Activated CD4-positive, alpha-beta T cell treated with anti-CD3 and anti-CD28 coated beads for 36 hours (primary cell): ENCODE measurements at regions of chr4 and their contacts with region 1.

Region 1: DNA sequence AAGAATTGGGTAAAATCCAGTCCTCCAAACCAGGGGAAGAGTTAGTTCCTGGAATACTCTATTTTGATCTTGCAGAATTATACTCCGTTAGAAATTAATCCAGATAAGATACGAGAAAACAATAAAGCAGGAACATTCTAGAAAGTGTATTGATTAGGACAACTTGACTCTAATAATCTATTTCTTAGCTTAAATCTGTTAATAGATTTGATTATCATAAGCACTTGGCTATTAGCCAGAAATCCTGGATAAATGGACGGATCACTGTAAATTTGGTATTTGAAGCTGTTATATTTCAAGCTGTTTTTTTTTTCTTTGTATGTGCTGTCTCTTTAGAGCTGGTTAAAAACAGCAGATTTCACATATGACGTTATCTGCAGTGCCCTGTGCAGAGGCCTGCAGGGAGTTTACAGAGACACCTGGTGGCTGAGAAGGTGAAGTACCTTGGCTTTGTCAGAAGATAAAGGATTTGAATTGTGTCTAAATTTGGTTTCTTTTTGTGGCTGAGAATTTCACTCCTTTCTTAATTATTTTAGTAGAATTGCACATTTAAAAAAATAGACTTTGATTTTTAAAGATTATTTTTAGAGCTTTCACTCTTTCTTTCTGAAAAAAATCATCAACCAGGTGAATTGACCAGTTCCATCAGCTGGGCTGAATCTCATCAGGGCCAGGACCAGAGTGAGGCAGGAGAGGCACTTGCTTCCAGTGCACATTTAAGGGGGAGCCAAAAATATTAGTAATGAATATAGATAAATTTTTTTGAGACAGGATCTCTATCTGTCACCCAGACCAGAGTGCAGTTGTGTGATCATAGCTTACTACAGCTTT is 9.7 kb upstream of the CHRNA9 start:
- DNase-seq: peak; percentile 78
- ATAC-seq: peak; percentile 98
- H3K4me3 Mint-ChIP-seq: no peak overlapping the region
- H3K27ac Mint-ChIP-seq: no peak overlapping the region
- H3K4me1 Mint-ChIP-seq: peaks cover 27% of the 10 kb centered on the region
- H3K27me3 Mint-ChIP-seq: peaks cover 2% of the 10 kb centered on the region

Region 2: DNA sequence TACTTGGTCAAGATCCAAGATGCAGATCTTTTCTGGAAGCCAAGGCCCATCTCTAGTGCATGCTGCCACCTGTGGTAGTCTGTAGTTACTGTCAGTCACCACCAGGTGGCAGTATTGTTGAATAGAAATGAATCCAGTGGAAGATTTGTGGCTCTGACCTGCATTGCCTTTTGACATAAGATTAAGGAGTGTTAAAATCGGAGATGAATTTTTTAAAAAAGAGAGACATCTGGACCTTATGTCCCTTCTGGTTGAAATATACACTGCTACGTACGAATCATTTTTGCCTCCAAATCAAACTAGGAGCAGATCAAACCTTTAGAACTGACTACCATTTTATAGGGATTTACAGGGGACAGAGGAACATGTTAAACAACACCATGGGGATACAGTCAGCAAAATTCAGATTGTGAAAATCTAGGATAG is 175.4 kb before region 1 on chr4:
- CTCF ChIA-PET with region 1: interaction called, 25 read pairs
- POLR2A ChIA-PET with region 1: no interaction called
- intact Hi-C with region 1: loop called (anchors 1 kb)
- DNase-seq: peak; percentile 80
- ATAC-seq: peak; percentile 96
- H3K4me3 Mint-ChIP-seq: no peak overlapping the region
- H3K27ac Mint-ChIP-seq: peak overlapping the region; percentile 61
- H3K4me1 Mint-ChIP-seq: peaks cover 33% of the 10 kb centered on the region
- H3K27me3 Mint-ChIP-seq: no peaks in the 10 kb centered on the region

Region 3: DNA sequence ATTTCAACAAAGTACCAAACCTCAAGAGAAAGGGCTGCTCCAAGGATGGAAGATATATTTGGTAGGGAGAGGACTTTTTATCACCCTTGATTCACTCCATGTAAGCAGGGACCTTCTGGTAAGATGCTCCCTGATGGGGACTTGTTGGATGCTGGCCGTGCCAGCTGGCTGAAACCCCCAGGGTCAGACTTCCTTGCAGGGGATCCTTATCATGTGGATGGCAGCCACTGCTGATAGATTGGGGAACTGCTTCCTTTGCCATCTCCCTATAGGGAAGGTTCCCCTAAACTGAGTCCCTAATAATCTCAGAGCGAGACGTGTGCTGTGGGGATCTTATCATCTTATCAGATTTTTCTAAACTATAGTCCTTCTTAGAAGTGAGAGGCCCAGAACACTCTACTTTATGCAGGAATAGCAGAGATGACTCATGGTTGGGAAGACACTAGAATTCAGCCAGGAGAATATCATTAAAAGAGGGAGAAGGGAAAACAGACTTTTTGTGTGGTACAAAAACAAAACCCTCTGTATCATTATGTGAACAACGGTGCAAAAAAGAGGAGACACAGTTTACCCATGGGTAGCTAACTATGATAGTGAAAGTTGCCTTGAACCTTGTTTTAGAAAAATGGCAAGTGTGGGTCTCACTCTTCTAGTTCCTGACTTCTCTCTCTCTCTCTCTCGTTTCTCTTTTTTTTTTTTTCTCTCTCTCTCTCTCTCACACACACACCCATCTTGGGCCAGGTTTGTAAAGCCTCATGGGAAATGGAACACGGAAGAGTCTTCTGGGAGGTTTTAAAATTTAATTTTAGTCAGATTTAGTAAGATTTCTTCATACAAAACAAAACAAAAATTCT is 112.5 kb before region 1 on chr4:
- CTCF ChIA-PET with region 1: interaction called, 10 read pairs
- POLR2A ChIA-PET with region 1: no interaction called
- intact Hi-C with region 1: no loop called
- DNase-seq: peak; percentile 9
- ATAC-seq: peak; percentile 35
- H3K4me3 Mint-ChIP-seq: peak overlapping the region; percentile 75
- H3K27ac Mint-ChIP-seq: peak overlapping the region; percentile 93
- H3K4me1 Mint-ChIP-seq: peaks cover 92% of the 10 kb centered on the region
- H3K27me3 Mint-ChIP-seq: no peaks in the 10 kb centered on the region

Region 4: DNA sequence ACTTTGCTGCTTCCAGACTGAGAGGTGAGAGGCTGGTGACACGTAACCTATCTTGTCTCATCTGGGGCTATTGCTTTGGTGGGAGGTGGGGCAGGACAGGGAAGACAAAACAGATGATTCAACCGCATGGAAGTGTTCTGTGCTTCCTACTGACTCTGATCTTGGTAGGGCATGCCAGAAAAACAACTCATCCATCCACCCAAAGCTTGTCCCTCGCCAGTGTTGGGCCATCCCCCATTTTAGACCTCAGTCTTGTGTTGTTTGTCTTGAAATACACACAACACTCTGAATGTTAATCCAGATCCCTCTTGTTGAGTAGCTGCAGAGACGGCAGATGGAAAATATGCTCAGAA is 10.1 kb after region 1 on chr4:
- CTCF ChIA-PET with region 1: interaction called, 37 read pairs
- POLR2A ChIA-PET with region 1: no interaction called
- intact Hi-C with region 1: no loop called
- DNase-seq: no peak
- ATAC-seq: no peak
- H3K4me3 Mint-ChIP-seq: no peak overlapping the region
- H3K27ac Mint-ChIP-seq: no peak overlapping the region
- H3K4me1 Mint-ChIP-seq: peaks cover 5% of the 10 kb centered on the region
- H3K27me3 Mint-ChIP-seq: no peaks in the 10 kb centered on the region